Caki2 (cell line): ENCODE measurements at regions of chr12 and their contacts with region 1.

Region 1: DNA sequence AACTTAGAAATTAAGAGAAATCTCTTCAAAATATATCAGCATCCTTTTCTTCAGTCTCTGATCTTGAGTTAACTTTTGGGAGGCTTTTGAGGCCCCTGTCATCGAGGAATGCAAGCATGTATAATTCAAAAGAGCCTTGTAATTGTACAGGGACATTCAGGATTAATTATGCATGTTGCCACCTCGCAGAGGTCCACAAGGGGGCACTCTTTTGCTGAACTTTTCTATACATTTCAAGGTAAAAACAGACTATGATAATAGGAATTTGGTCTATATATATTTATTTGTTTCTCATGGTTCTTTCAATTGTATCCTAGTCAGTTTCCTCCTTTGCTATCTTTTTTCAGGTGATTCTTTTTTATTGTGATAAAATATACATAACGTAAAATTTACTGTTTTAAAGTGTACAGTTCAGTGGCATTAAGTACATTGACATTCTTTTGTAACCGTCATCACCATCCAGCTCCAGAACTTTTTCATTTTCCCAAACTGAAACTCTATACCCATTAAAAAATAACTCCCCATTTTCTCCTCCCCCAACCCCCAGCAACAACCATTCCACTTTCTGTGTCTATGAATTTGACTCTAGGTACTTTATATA is 47.0 kb upstream of the SLC2A13 start:
- DNase-seq: peak; percentile 25

Region 2: GRCh38 chr12:40065636-40066035 is 87.2 kb before region 1 on chr12:
- in situ Hi-C with region 1: no loop called
- DNase-seq: no peak

Region 3: DNA sequence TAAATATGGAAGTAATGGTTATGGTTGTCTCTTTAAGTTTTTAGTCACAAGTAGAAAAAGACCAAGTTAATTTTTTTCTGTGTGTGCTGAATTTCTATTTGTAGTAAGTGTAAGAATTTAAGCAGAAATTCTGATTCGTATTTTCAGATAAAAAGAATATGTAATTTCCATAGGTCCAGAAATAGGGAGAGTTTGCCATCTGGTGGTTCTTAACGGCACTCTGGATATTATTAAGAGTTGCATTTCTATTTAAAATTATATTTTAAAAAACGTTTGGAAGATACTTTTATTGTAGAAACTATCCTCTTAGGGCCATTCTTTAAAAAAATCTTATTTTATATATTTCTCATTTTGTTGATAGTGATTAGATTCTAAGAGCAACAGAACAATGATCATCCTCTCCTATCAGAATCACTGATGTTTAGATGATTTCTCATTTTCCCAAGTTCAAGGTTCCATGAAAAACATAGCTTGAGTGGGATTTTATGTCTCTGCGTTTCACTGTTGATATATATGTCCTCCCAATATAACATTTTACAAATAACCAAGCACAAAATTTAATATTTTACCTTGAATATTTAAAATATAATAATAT is 160.2 kb after region 1 on chr12:
- in situ Hi-C with region 1: loop called (anchors 25 kb)
- DNase-seq: no peak